Mammary epithelial cell (primary cell): ENCODE measurements at regions of chr1 and their contacts with region 1.

Region 1: GRCh38 chr1:93979718-93980319 is 70.6 kb upstream of the GCLM start:
- DNase-seq: no peak
- H3K4me3 ChIP-seq: no peak overlapping the region
- H3K27ac ChIP-seq: no peak overlapping the region
- H3K4me1 ChIP-seq: peaks cover 52% of the 10 kb centered on the region
- H3K27me3 ChIP-seq: no peaks in the 10 kb centered on the region
- CTCF ChIP-seq: no peak

Region 2: DNA sequence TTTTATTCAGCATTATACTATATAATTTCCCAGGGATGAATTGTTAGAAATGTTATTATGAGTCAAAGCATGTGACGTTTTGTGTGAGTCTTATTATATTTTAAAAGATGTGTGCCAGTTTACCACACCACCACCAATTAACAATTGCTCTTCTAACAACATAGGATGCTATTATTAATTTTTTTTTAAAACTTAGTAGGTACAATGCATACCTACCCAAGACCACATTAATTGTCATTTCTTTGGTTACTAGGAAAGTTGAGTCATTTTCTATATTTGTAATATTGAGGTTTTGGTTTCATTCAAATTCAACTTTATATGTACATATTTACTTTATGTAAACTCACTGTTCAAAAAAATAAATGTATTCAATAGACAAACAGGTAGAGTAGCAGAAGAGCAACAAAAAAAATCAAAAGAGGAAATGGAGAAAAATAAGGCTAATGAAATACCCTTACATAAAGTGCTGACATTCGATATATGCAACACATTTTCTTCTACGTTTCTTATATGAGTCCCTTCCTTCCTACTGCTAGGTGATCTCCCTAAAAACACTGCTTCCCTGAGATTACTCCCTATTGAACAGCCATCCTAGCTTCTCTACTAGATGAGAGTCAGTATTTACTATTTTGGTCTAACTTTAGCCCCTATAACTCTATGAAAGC is 80.1 kb before region 1 on chr1:
- CTCF ChIA-PET with region 1: no interaction called
- dilution Hi-C with region 1: no loop called
- in situ Hi-C with region 1: no loop called
- intact Hi-C with region 1: no loop called
- DNase-seq: no peak
- H3K4me3 ChIP-seq: no peak overlapping the region
- H3K27ac ChIP-seq: no peak overlapping the region
- H3K4me1 ChIP-seq: peaks cover 8% of the 10 kb centered on the region
- H3K27me3 ChIP-seq: no peaks in the 10 kb centered on the region
- CTCF ChIP-seq: no peak

Region 3: DNA sequence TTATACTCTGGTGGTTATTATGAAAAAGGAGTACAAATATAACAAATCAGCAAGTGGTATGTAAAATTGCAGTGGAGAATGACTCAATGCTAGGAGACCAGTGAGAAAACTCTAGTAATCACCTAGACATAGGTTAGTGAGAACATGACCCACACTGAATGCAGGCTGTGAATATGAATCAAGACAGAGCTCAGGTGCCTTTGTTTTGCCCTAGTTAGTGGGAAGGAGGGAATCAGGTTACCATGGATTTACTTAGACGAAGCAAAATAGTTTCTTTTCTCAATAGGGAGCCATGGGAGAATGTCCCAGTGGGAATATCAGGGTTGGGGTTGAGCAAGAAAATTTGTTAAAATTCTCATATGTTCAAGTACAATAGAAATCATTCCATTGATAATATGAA is 60.0 kb before region 1 on chr1:
- CTCF ChIA-PET with region 1: no interaction called
- dilution Hi-C with region 1: loop called (anchors 5 kb)
- in situ Hi-C with region 1: no loop called
- intact Hi-C with region 1: no loop called
- DNase-seq: no peak
- H3K4me3 ChIP-seq: no peak overlapping the region
- H3K27ac ChIP-seq: no peak overlapping the region
- H3K4me1 ChIP-seq: no peaks in the 10 kb centered on the region
- H3K27me3 ChIP-seq: no peaks in the 10 kb centered on the region
- CTCF ChIP-seq: no peak